GM12878 (cell line): ENCODE measurements at regions of chr21 and their contacts with region 1.

Region 1: DNA sequence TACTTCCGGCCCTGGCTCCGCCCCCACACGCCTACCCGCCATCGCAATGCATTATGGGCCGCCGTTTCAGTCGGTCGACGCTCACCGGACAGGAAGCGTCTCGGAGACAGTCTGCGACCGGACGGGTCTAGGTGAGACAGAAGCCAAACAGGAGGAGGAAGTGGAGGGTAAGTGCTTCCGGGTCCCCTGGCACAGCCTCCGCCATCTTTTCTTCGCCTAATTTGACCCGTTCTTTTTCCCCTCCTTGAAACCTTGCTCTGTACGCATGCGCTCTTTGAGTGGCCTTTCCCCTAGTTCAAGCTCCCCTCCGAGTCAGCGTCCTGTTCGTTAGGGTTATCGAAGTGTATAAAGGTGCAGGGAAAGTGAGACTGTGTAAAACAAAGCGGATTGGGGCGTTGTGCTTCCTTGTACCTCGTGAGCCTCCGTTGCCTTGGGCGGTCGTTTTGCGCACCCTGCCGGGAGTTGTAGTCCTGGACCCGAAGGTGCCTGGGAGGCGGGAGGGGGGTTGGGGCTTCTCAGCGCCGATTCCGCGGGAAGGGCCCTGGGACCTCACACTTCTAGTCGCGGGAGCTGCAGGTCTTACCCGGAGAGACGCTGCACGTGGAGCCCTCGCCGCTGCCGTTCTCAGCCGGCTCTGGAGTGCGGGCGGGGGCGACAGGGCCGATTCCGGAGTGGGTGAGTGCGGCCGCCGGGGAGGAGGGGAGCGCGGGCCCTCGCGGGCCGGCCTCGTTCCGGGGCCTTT is at the starts of genes ATP5PF and GABPA:
- DNase-seq: peak; percentile 97
- ATAC-seq: peak; percentile 90
- H3K4me3 ChIP-seq: peak within 1 kb of the TSS; percentile 98
- H3K27ac ChIP-seq: peak within 1 kb of the TSS; percentile 97
- H3K4me1 ChIP-seq: peaks cover 26% of the 10 kb centered on the region
- H3K27me3 ChIP-seq: no peaks in the 10 kb centered on the region
- CTCF ChIP-seq: no peak
- EP300 ChIP-seq: peak in 1 of 2 experiments; percentile 41; a peak in 1 of 4 replicates
- POLR2A ChIP-seq: peak; percentile 72
- RAD21 ChIP-seq: no peak
- polyA plus RNA-seq, gene ATP5PF: 1,189 to 1,604 TPM
- polyA plus RNA-seq, gene GABPA: 7.6 to 8.4 TPM

Region 2: DNA sequence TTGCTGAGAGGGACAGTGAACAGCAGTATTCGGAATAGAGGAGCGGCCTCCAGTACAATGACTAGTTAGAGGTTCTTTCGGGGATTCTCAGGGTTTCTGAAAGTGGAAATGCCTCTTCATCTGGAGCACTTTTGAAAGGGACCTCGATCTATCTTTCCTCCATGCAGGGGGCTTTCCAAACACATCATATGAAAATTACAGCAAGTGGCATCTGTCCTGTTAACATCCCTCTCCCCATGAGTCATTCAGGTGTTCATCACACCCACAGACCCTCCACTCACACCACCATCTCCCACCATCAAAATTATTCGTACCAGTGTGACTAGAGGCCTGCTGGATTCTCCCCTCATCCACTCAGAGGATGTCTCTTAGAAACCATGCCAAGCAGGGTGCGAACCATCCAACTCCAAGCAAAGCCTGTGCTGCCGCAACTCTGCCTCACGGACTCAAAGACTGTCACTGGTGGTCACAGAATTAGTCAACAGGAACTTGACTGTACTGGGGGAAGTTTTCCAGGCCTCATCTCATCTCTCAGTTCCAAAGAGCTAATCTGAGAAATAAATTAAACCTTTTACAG is 338.9 kb before region 1 on chr21:
- CTCF ChIA-PET with region 1: no interaction called
- POLR2A ChIA-PET with region 1: no interaction called
- RAD21 ChIA-PET with region 1: no interaction called
- SMC1A ChIA-PET with region 1: no interaction called
- in situ Hi-C with region 1: no loop called
- intact Hi-C with region 1: loop called (anchors 5 kb)
- DNase-seq: peak; percentile 88
- ATAC-seq: peak; percentile 91
- H3K4me3 ChIP-seq: peak overlapping the region; percentile 54
- H3K27ac ChIP-seq: peak overlapping the region; percentile 92
- H3K4me1 ChIP-seq: peaks cover 20% of the 10 kb centered on the region
- H3K27me3 ChIP-seq: no peaks in the 10 kb centered on the region
- CTCF ChIP-seq: no peak
- EP300 ChIP-seq: peak; percentile 61 to 79
- POLR2A ChIP-seq: no peak
- RAD21 ChIP-seq: no peak

Region 3: DNA sequence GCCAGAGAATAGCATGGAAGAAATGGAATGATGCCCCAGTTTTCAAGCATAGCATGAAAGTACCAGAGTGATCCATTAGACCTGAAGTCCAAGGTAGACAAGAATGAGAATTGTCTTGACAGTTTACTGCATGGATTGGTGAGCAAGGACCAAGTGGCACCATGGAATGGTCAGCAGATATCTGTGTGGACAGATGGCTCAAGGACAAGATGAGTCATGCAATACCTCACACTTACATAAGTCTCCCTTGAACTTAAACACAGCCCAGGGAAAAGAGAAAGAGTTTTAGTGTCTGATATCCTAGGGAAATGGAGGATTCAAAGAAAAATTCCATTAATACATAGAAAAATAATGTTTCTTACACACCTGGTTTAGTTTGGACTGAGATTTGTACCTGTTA is 323.0 kb before region 1 on chr21:
- CTCF ChIA-PET with region 1: no interaction called
- POLR2A ChIA-PET with region 1: no interaction called
- RAD21 ChIA-PET with region 1: no interaction called
- SMC1A ChIA-PET with region 1: interaction called, 3 read pairs
- in situ Hi-C with region 1: loop called (anchors 10 kb)
- intact Hi-C with region 1: no loop called
- DNase-seq: no peak
- ATAC-seq: peak; percentile 28; the same call in 2 of the 3 replicates
- H3K4me3 ChIP-seq: no peak overlapping the region
- H3K27ac ChIP-seq: no peak overlapping the region; the same call in 1 of the 2 replicates
- H3K4me1 ChIP-seq: peaks cover 12% of the 10 kb centered on the region
- H3K27me3 ChIP-seq: no peaks in the 10 kb centered on the region
- CTCF ChIP-seq: no peak
- EP300 ChIP-seq: no peak
- POLR2A ChIP-seq: no peak
- RAD21 ChIP-seq: no peak

Region 4: GRCh38 chr21:25626757-25627156 is 108.3 kb before region 1 on chr21:
- CTCF ChIA-PET with region 1: no interaction called
- POLR2A ChIA-PET with region 1: no interaction called
- RAD21 ChIA-PET with region 1: no interaction called
- SMC1A ChIA-PET with region 1: no interaction called
- in situ Hi-C with region 1: no loop called
- intact Hi-C with region 1: no loop called
- DNase-seq: no peak
- ATAC-seq: no peak
- H3K4me3 ChIP-seq: no peak overlapping the region
- H3K27ac ChIP-seq: no peak overlapping the region
- H3K4me1 ChIP-seq: no peaks in the 10 kb centered on the region
- H3K27me3 ChIP-seq: no peaks in the 10 kb centered on the region; a peak in 1 of 4 replicates
- CTCF ChIP-seq: no peak
- EP300 ChIP-seq: no peak
- POLR2A ChIP-seq: no peak
- RAD21 ChIP-seq: no peak

Region 5: DNA sequence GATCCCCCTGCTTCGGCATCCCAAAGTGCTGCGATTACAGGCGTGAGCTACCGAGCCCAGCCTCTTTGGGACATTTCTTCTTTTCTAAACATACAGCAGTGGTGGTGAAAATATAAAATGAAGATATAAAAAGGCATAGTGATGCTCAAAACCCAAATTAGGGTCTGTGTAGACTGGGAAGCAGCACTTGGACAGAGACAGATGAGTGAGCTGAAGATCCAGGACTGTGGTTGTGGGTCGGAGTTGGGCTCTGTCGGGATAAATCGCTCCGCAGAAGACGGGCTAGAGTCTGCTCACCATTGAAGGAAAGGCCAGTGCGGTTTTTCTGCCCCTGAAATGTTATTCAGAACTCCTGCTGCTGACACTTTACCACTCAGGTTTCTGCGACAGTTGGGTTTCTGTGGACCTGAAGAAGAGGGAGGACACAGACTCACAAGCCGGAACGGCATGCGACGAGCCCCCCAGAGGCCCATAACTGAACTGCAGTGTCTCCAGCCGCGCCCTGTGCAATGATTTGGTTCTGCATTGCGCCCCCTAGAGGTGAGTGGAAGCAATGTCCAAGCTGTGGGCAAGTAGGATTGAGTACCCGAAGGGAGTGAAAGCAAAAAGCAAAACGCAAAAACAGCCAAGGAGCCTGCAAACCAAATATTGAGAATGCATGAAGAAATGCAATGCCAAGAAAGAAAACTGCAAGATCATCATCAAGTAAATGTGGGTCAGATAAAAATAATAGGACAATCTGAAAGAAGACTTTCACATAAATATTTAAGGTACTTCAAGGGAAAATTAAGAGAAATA is 66.3 kb after region 1 on chr21:
- CTCF ChIA-PET with region 1: no interaction called
- POLR2A ChIA-PET with region 1: no interaction called
- RAD21 ChIA-PET with region 1: no interaction called
- SMC1A ChIA-PET with region 1: no interaction called
- in situ Hi-C with region 1: no loop called
- intact Hi-C with region 1: loop called (anchors 2 kb)
- DNase-seq: peak; percentile 59
- ATAC-seq: peak; percentile 100
- H3K4me3 ChIP-seq: no peak overlapping the region
- H3K27ac ChIP-seq: no peak overlapping the region
- H3K4me1 ChIP-seq: no peaks in the 10 kb centered on the region
- H3K27me3 ChIP-seq: no peaks in the 10 kb centered on the region
- CTCF ChIP-seq: peak; percentile 98 to 100 (median 99)
- EP300 ChIP-seq: no peak
- POLR2A ChIP-seq: no peak
- RAD21 ChIP-seq: peak; percentile 64

Region 6: GRCh38 chr21:26047279-26047967 is 312.3 kb after region 1 on chr21:
- CTCF ChIA-PET with region 1: no interaction called
- POLR2A ChIA-PET with region 1: no interaction called
- RAD21 ChIA-PET with region 1: no interaction called
- SMC1A ChIA-PET with region 1: no interaction called
- in situ Hi-C with region 1: no loop called
- intact Hi-C with region 1: no loop called
- DNase-seq: no peak
- ATAC-seq: no peak
- H3K4me3 ChIP-seq: no peak overlapping the region
- H3K27ac ChIP-seq: no peak overlapping the region
- H3K4me1 ChIP-seq: no peaks in the 10 kb centered on the region
- H3K27me3 ChIP-seq: no peaks in the 10 kb centered on the region
- CTCF ChIP-seq: no peak
- EP300 ChIP-seq: no peak
- POLR2A ChIP-seq: no peak
- RAD21 ChIP-seq: no peak

Region 7: GRCh38 chr21:26099610-26100219 is 364.6 kb after region 1 on chr21:
- CTCF ChIA-PET with region 1: no interaction called
- POLR2A ChIA-PET with region 1: no interaction called
- RAD21 ChIA-PET with region 1: no interaction called
- SMC1A ChIA-PET with region 1: no interaction called
- in situ Hi-C with region 1: no loop called
- intact Hi-C with region 1: no loop called
- DNase-seq: no peak
- ATAC-seq: no peak
- H3K4me3 ChIP-seq: no peak overlapping the region
- H3K27ac ChIP-seq: no peak overlapping the region
- H3K4me1 ChIP-seq: no peaks in the 10 kb centered on the region
- H3K27me3 ChIP-seq: no peaks in the 10 kb centered on the region
- CTCF ChIP-seq: no peak
- EP300 ChIP-seq: no peak
- POLR2A ChIP-seq: no peak
- RAD21 ChIP-seq: no peak